Natural killer cell (primary cell): ENCODE measurements at regions of chr7 and their contacts with region 1.

Region 1: GRCh38 chr7:152591976-152592375 is 84.0 kb downstream of the XRCC2 start:
- DNase-seq: no peak
- ATAC-seq: no peak
- H3K4me3 ChIP-seq: no peak overlapping the region
- H3K4me3 Mint-ChIP-seq: no peak overlapping the region
- H3K27ac ChIP-seq: no peak overlapping the region
- H3K27ac Mint-ChIP-seq: no peak overlapping the region
- H3K4me1 ChIP-seq: peaks cover 7% of the 10 kb centered on the region
- H3K4me1 Mint-ChIP-seq: no peaks in the 10 kb centered on the region
- H3K27me3 ChIP-seq: no peaks in the 10 kb centered on the region
- H3K27me3 Mint-ChIP-seq: no peaks in the 10 kb centered on the region
- CTCF ChIP-seq: no peak

Region 2: DNA sequence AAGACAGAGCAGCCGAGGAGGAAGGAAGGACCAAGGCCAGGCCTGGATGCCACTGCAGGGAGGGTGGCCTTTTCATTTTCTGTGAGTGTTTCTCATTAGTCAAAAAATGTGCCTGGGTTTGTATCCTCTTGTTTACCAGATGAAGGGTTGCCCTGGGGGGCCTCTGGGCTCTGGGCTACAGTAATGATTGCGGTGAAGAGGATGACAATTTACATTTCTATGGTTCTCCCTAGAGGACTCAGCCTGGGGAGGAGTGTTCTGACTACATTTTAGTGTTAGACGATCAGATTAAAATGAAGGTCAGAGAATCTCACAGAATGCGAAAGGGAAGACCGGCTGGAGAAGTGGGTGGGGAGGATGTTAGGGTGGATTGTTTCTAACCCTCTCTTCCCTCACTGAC is 48.2 kb before region 1 on chr7:
- intact Hi-C with region 1: no loop called
- DNase-seq: no peak
- ATAC-seq: no peak
- H3K4me3 ChIP-seq: no peak overlapping the region
- H3K4me3 Mint-ChIP-seq: no peak overlapping the region
- H3K27ac ChIP-seq: no peak overlapping the region
- H3K27ac Mint-ChIP-seq: no peak overlapping the region
- H3K4me1 ChIP-seq: no peaks in the 10 kb centered on the region
- H3K4me1 Mint-ChIP-seq: no peaks in the 10 kb centered on the region
- H3K27me3 ChIP-seq: no peaks in the 10 kb centered on the region
- H3K27me3 Mint-ChIP-seq: no peaks in the 10 kb centered on the region
- CTCF ChIP-seq: no peak

Region 3: GRCh38 chr7:152619027-152619739 is 27.2 kb after region 1 on chr7:
- intact Hi-C with region 1: loop called (anchors 2 kb)
- DNase-seq: no peak
- ATAC-seq: no peak
- H3K4me3 ChIP-seq: no peak overlapping the region
- H3K4me3 Mint-ChIP-seq: no peak overlapping the region
- H3K27ac ChIP-seq: no peak overlapping the region
- H3K27ac Mint-ChIP-seq: no peak overlapping the region
- H3K4me1 ChIP-seq: no peaks in the 10 kb centered on the region
- H3K4me1 Mint-ChIP-seq: no peaks in the 10 kb centered on the region
- H3K27me3 ChIP-seq: no peaks in the 10 kb centered on the region
- H3K27me3 Mint-ChIP-seq: no peaks in the 10 kb centered on the region
- CTCF ChIP-seq: no peak